Transverse colon (tissue), 4 donors: ENCODE measurements at regions of chr3 and their contacts with region 1.

Region 1: GRCh38 chr3:24237971-24238767 is 256.5 kb downstream of the THRB start:
- DNase-seq: peak; percentile 26
- H3K4me3 ChIP-seq: no peak overlapping the region
- H3K27ac ChIP-seq: peak overlapping the region; percentile 30 to 48 (median 46)
- H3K4me1 ChIP-seq: peaks cover 4 to 29% (median 10%) of the 10 kb centered on the region in 4 donors
- H3K27me3 ChIP-seq: no peaks in the 10 kb centered on the region
- CTCF ChIP-seq: peak; percentile 60 to 79 (median 64)
- EP300 ChIP-seq: no peak
- POLR2A ChIP-seq: no peak

Region 2: GRCh38 chr3:23888617-23889228 is 349.4 kb before region 1 on chr3:
- in situ Hi-C with region 1: loop called in 1 of 4 experiments (anchors 25 kb)
- intact Hi-C with region 1: no loop called
- DNase-seq: no peak
- H3K4me3 ChIP-seq: no peak overlapping the region
- H3K27ac ChIP-seq: no peak overlapping the region
- H3K4me1 ChIP-seq: no peaks in the 10 kb centered on the region
- H3K27me3 ChIP-seq: no peaks in the 10 kb centered on the region
- CTCF ChIP-seq: peak; percentile 70 to 92 (median 88)
- EP300 ChIP-seq: no peak
- POLR2A ChIP-seq: no peak

Region 3: GRCh38 chr3:23999012-23999641 is 239.0 kb before region 1 on chr3:
- in situ Hi-C with region 1: loop called (anchors 10 to 25 kb)
- intact Hi-C with region 1: loop called (anchors 5 kb)
- DNase-seq: peak; percentile 71
- H3K4me3 ChIP-seq: no peak overlapping the region
- H3K27ac ChIP-seq: no peak overlapping the region
- H3K4me1 ChIP-seq: peaks cover 0 to 6% (median under 1%) of the 10 kb centered on the region in 4 donors
- H3K27me3 ChIP-seq: no peaks in the 10 kb centered on the region
- CTCF ChIP-seq: peak; percentile 84 to 95 (median 90)
- EP300 ChIP-seq: no peak
- POLR2A ChIP-seq: no peak

Region 4: GRCh38 chr3:24004171-24004938 is 233.8 kb before region 1 on chr3:
- in situ Hi-C with region 1: loop called (anchors 10 to 25 kb)
- intact Hi-C with region 1: loop called (anchors 5 kb)
- DNase-seq: no peak
- H3K4me3 ChIP-seq: no peak overlapping the region
- H3K27ac ChIP-seq: no peak overlapping the region
- H3K4me1 ChIP-seq: peaks cover 0 to 1% (median 0%) of the 10 kb centered on the region in 4 donors
- H3K27me3 ChIP-seq: no peaks in the 10 kb centered on the region
- CTCF ChIP-seq: no peak
- EP300 ChIP-seq: no peak
- POLR2A ChIP-seq: no peak

Region 5: GRCh38 chr3:24272875-24273274 is 34.7 kb after region 1 on chr3:
- in situ Hi-C with region 1: no loop called
- intact Hi-C with region 1: no loop called
- DNase-seq: no peak
- H3K4me3 ChIP-seq: no peak overlapping the region
- H3K27ac ChIP-seq: no peak overlapping the region
- H3K4me1 ChIP-seq: peaks cover 0 to 14% (median 2%) of the 10 kb centered on the region in 4 donors
- H3K27me3 ChIP-seq: no peaks in the 10 kb centered on the region
- CTCF ChIP-seq: no peak
- EP300 ChIP-seq: no peak
- POLR2A ChIP-seq: no peak

Region 6: GRCh38 chr3:24343084-24343783 is 105.1 kb after region 1 on chr3:
- in situ Hi-C with region 1: no loop called
- intact Hi-C with region 1: no loop called
- DNase-seq: no peak
- H3K4me3 ChIP-seq: no peak overlapping the region
- H3K27ac ChIP-seq: no peak overlapping the region
- H3K4me1 ChIP-seq: peaks cover 12 to 29% (median 16%) of the 10 kb centered on the region in 4 donors
- H3K27me3 ChIP-seq: no peaks in the 10 kb centered on the region
- CTCF ChIP-seq: no peak
- EP300 ChIP-seq: no peak
- POLR2A ChIP-seq: no peak